ENCODE measurements at regions of chr11 and their contacts with region 1.

Region 1: DNA sequence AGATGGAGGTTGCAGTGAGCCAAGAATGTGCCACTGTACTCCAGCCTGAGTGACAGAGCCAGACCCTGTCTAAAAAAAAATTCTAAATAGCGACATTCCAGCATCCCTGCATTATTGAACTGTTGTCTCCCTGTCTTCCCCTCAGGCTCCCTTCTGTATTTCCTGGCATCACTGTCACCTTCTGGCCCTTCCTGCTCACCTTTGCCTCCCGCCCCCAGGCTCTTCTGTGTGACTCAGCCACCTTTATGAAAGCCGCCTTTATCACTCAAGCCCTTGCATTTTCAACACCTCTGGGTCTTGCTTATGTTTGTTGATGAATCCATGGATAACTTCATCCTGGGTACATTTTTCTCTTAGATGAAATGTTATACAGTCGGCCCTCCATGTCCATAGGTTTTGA is 21.1 kb downstream of the UBASH3B start:
- DNase-seq: peak; percentile 87 to 99
- H3K4me3 ChIP-seq: no peak overlapping the region
- H3K27ac ChIP-seq: peak overlapping the region; percentile 91
- H3K4me1 ChIP-seq: peaks cover 79% of the 10 kb centered on the region
- H3K27me3 ChIP-seq: no peaks in the 10 kb centered on the region
- CTCF ChIP-seq: no peak

Region 2: GRCh38 chr11:122661182-122661945 is 15.3 kb before region 1 on chr11:
- CTCF ChIA-PET with region 1: interaction called, 6 read pairs
- POLR2A ChIA-PET with region 1: interaction called, 3 read pairs
- intact Hi-C with region 1: loop called (anchors 2 kb)
- DNase-seq: peak; percentile 64 to 100
- H3K4me3 ChIP-seq: peak overlapping the region; percentile 39; the same call in 1 of the 2 replicates
- H3K27ac ChIP-seq: peak overlapping the region; percentile 91
- H3K4me1 ChIP-seq: peaks cover 87% of the 10 kb centered on the region
- H3K27me3 ChIP-seq: no peaks in the 10 kb centered on the region
- CTCF ChIP-seq: no peak

Region 3: DNA sequence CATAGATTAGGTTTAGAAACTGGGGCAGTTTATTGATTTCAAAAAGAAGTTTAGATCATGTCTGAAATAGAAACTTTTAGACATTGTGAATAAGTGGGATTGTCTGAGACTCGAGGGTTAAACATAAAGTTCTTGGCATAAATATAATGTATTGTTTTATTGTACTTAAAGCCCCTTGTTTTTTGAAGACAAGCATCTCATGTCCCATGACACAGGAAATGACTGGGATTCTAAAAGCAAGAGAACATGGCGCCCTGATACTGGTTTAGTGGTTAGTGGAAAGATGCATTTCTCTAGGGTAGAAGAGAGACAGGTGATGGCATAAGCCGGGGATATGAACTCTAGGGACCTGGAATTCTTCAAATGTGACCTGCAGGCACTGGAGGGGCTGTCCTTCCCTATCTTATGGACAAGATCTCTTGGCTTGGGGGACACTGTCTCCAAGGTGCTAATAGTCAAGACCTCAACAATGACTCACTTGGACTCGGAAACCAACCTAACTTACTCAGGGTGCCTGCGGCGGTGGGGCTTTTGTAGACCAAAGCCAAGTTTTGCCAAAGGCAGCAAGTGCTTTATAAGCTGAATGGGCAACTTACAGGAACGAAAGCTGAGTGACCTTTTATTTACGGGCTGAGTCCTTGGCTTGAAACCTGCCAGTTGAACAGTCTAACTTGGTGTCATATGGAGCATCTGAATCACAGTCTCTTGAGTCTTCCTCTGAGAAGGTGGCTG is 27.1 kb after region 1 on chr11:
- CTCF ChIA-PET with region 1: interaction called, 7 read pairs
- POLR2A ChIA-PET with region 1: no interaction called
- intact Hi-C with region 1: loop called (anchors 1 kb)
- DNase-seq: peak in 1 of 2 experiments; percentile 88
- H3K4me3 ChIP-seq: no peak overlapping the region
- H3K27ac ChIP-seq: peak overlapping the region; percentile 12; the same call in 1 of the 2 replicates
- H3K4me1 ChIP-seq: peaks cover 35% of the 10 kb centered on the region
- H3K27me3 ChIP-seq: no peaks in the 10 kb centered on the region
- CTCF ChIP-seq: no peak